ENCODE measurements at regions of chr5 and their contacts with region 1.

Region 1: GRCh38 chr5:82664732-82665131 is 386.6 kb upstream of the RPS23 start:
- DNase-seq: no peak
- ATAC-seq: no peak
- H3K4me3 ChIP-seq: no peak overlapping the region
- H3K27ac ChIP-seq: no peak overlapping the region
- H3K4me1 ChIP-seq: no peaks in the 10 kb centered on the region
- H3K27me3 ChIP-seq: no peaks in the 10 kb centered on the region
- CTCF ChIP-seq: no peak

Region 2: GRCh38 chr5:82785882-82786509 is 121.3 kb after region 1 on chr5:
- intact Hi-C with region 1: loop called in 1 of 10 experiments (anchors 10 kb)
- DNase-seq: no peak
- ATAC-seq: no peak
- H3K4me3 ChIP-seq: no peak overlapping the region
- H3K27ac ChIP-seq: no peak overlapping the region
- H3K4me1 ChIP-seq: no peaks in the 10 kb centered on the region
- H3K27me3 ChIP-seq: no peaks in the 10 kb centered on the region
- CTCF ChIP-seq: no peak